H1 (cell line): ENCODE measurements at regions of chrX and their contacts with region 1.

Region 1: DNA sequence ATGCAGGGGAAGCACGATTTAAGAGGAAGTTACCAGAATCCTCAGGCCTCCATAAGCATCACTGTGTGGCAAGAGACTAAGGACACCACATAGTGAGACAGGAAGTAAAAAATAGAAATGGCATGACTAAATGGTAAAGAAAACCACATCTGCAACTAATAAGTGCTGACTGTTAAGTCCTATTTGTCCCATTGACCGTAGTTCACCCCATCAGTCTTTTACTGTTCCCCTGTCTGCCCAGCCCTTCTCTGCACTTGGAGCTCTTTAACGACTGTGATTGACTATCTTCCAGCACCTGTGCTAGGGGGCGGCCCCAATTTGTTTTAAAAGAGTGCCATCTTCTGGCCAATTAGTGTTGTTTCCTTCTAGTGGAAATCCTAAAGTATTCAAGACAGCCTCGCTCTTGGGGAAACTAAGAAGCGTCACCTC is 94.2 kb downstream of the MAOA start:
- DNase-seq: peak; percentile 10 to 43
- H3K4me3 ChIP-seq: no peak overlapping the region
- H3K27ac ChIP-seq: no peak overlapping the region
- H3K4me1 ChIP-seq: no peaks in the 10 kb centered on the region
- H3K27me3 ChIP-seq: no peaks in the 10 kb centered on the region
- CTCF ChIP-seq: peak in 2 of 3 experiments; percentile 36 to 55; a peak in 3 of 4 replicates
- EP300 ChIP-seq: no peak
- POLR2A ChIP-seq: no peak
- RAD21 ChIP-seq: peak; percentile 80 to 86

Region 2: GRCh38 chrX:43564953-43565352 is 185.3 kb before region 1 on chrX:
- CTCF ChIA-PET with region 1: interaction called, 12 read pairs
- POLR2A ChIA-PET with region 1: no interaction called
- DNase-seq: no peak
- H3K4me3 ChIP-seq: no peak overlapping the region
- H3K27ac ChIP-seq: no peak overlapping the region
- H3K4me1 ChIP-seq: no peaks in the 10 kb centered on the region
- H3K27me3 ChIP-seq: no peaks in the 10 kb centered on the region
- CTCF ChIP-seq: no peak
- EP300 ChIP-seq: no peak
- POLR2A ChIP-seq: no peak
- RAD21 ChIP-seq: peak in 1 of 2 experiments; percentile 33; a peak in 1 of 4 replicates

Region 3: DNA sequence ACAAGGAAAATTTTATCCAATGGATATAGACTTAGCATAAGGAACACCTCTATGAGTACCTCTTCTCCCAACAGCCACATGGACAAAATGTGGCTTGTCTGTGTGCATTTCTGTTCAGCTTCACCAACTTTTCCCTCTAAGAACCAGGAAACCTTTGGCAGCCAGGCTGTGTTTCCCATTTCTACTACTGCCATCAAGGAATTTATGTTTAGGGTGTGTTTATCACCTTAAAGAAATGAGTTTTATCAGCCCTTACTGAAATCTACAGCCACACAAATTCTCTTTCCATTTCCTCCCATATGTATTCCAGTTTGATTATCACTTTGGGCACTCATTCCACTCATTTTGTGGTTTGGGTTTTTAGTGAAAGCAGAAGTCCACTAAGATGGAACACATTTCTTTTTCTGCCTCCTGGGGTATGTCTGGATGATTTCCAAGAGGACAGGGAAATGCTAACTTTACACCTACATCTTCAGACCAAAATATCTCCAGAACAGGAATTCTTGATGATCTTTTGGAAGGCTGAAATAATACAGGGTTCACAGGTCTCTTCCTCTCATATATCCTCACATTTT is 176.7 kb before region 1 on chrX:
- CTCF ChIA-PET with region 1: interaction called, 13 read pairs
- POLR2A ChIA-PET with region 1: no interaction called
- DNase-seq: no peak
- H3K4me3 ChIP-seq: no peak overlapping the region
- H3K27ac ChIP-seq: no peak overlapping the region
- H3K4me1 ChIP-seq: no peaks in the 10 kb centered on the region
- H3K27me3 ChIP-seq: no peaks in the 10 kb centered on the region
- CTCF ChIP-seq: no peak
- EP300 ChIP-seq: no peak
- POLR2A ChIP-seq: no peak
- RAD21 ChIP-seq: no peak

Region 4: GRCh38 chrX:43585922-43586321 is 164.3 kb before region 1 on chrX:
- CTCF ChIA-PET with region 1: interaction called, 15 read pairs
- POLR2A ChIA-PET with region 1: no interaction called
- DNase-seq: no peak
- H3K4me3 ChIP-seq: no peak overlapping the region
- H3K27ac ChIP-seq: no peak overlapping the region
- H3K4me1 ChIP-seq: no peaks in the 10 kb centered on the region
- H3K27me3 ChIP-seq: no peaks in the 10 kb centered on the region
- CTCF ChIP-seq: peak in 2 of 3 experiments; percentile 25 to 37; a peak in 3 of 4 replicates
- EP300 ChIP-seq: no peak
- POLR2A ChIP-seq: no peak
- RAD21 ChIP-seq: peak; percentile 50 to 65

Region 5: DNA sequence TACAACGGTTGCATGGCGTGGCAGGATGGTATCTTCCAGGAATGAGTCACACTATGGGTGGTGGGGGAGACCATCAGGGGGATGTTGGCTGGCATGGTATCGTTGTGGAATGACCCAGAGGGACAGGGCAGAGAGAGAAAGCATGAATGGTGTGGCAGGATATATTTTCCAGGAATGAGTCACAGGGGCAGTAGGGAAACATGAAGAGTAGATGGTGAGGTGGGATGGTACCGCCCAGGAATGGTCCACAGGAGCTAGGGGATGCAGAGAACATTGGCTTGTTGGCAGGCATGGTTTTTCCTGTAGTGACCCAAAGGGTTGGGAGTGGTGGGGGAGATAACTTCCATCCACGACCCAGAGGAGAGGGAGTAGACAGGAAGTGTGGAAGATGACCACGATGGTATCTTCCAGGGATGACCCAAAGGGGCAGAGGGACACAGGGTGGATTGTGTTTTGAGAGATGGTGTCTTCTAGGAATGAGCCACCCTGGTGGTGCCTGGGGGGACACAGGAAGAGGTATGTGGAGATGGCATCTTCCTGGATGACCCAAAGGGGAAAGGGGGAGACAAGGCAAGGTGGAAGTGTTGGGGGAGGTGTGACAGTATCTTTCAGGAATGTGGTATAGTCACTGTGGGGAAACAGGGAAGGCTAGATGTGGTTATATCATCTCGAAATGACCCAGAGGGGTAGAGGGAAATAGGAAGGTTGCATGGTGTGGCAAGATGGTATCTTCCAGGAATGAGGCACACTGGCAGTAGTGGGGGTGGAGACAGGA is 31.5 kb before region 1 on chrX:
- CTCF ChIA-PET with region 1: no interaction called
- POLR2A ChIA-PET with region 1: no interaction called
- DNase-seq: no peak
- H3K4me3 ChIP-seq: no peak overlapping the region
- H3K27ac ChIP-seq: no peak overlapping the region
- H3K4me1 ChIP-seq: no peaks in the 10 kb centered on the region
- H3K27me3 ChIP-seq: no peaks in the 10 kb centered on the region
- CTCF ChIP-seq: no peak
- EP300 ChIP-seq: no peak
- POLR2A ChIP-seq: no peak
- RAD21 ChIP-seq: no peak

Region 6: GRCh38 chrX:44012484-44013096 is 262.3 kb after region 1 on chrX:
- CTCF ChIA-PET with region 1: no interaction called
- POLR2A ChIA-PET with region 1: no interaction called
- DNase-seq: no peak
- H3K4me3 ChIP-seq: no peak overlapping the region
- H3K27ac ChIP-seq: no peak overlapping the region
- H3K4me1 ChIP-seq: no peaks in the 10 kb centered on the region
- H3K27me3 ChIP-seq: no peaks in the 10 kb centered on the region
- CTCF ChIP-seq: no peak
- EP300 ChIP-seq: no peak
- POLR2A ChIP-seq: no peak
- RAD21 ChIP-seq: no peak